Activated CD4-positive, alpha-beta memory T cell treated with anti-CD3 and anti-CD28 coated beads for 36 hours (primary cell): ENCODE measurements at regions of chr6 and their contacts with region 1.

Region 1: DNA sequence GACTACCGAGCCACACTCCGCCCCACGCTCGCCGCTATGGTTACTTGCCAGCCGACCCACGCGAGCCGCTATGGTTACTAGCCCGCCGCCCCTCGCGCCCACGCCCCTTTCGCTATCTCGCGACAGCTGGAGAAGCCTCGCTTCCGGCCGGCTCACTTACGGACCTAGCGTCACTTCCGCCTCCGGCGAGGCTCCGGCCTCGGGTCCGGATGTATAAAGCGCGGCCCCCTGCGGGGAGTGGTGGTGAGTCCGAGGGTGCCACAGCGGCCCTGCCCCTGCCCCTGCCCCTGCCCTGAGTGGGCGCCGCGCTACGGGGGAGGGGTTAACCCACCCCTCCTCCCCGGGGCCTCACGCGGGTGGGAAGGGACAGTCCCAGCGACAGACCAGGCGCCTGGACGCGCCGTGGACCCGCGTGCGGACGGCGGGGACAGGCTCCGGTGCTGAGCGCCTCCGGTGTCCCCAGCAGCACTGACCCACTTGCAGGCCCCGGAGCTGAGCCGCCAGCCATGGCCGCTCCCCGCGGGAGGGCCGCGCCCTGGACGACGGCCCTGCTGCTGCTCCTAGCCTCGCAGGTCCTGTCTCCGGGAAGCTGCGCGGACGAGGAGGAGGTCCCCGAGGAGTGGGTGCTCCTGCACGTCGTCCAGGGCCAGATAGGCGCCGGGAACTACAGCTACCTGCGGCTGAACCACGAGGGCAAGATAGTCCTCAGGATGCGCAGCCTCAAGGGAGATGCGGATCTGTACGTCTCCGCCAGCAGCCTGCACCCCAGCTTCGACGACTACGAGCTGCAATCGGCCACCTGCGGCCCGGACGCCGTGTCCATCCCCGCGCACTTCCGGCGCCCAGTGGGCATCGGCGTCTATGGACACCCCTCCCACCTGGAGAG is at the starts of genes C6orf120 and WDR27:
- DNase-seq: peak; percentile 99
- H3K4me3 Mint-ChIP-seq: peak within 1 kb of the TSS; percentile 89
- H3K27ac Mint-ChIP-seq: peak within 1 kb of the TSS; percentile 88
- H3K4me1 Mint-ChIP-seq: peaks cover 43% of the 10 kb centered on the region
- H3K27me3 Mint-ChIP-seq: no peaks in the 10 kb centered on the region
- total RNA-seq, gene C6orf120: 15.1 to 15.4 TPM
- total RNA-seq, gene WDR27: 39.7 to 41.6 TPM

Region 2: GRCh38 chr6:169479783-169480495 is 222.3 kb before region 1 on chr6:
- CTCF ChIA-PET with region 1: no interaction called
- POLR2A ChIA-PET with region 1: no interaction called
- intact Hi-C with region 1: no loop called
- DNase-seq: no peak
- H3K4me3 Mint-ChIP-seq: no peak overlapping the region
- H3K27ac Mint-ChIP-seq: no peak overlapping the region
- H3K4me1 Mint-ChIP-seq: no peaks in the 10 kb centered on the region
- H3K27me3 Mint-ChIP-seq: no peaks in the 10 kb centered on the region

Region 3: GRCh38 chr6:169654598-169655391 is 47.4 kb before region 1 on chr6:
- CTCF ChIA-PET with region 1: no interaction called
- POLR2A ChIA-PET with region 1: no interaction called
- intact Hi-C with region 1: loop called (anchors 1 kb)
- DNase-seq: peak; percentile 77
- H3K4me3 Mint-ChIP-seq: peak overlapping the region; percentile 77
- H3K27ac Mint-ChIP-seq: no peak overlapping the region
- H3K4me1 Mint-ChIP-seq: peaks cover 3% of the 10 kb centered on the region
- H3K27me3 Mint-ChIP-seq: no peaks in the 10 kb centered on the region

Region 4: DNA sequence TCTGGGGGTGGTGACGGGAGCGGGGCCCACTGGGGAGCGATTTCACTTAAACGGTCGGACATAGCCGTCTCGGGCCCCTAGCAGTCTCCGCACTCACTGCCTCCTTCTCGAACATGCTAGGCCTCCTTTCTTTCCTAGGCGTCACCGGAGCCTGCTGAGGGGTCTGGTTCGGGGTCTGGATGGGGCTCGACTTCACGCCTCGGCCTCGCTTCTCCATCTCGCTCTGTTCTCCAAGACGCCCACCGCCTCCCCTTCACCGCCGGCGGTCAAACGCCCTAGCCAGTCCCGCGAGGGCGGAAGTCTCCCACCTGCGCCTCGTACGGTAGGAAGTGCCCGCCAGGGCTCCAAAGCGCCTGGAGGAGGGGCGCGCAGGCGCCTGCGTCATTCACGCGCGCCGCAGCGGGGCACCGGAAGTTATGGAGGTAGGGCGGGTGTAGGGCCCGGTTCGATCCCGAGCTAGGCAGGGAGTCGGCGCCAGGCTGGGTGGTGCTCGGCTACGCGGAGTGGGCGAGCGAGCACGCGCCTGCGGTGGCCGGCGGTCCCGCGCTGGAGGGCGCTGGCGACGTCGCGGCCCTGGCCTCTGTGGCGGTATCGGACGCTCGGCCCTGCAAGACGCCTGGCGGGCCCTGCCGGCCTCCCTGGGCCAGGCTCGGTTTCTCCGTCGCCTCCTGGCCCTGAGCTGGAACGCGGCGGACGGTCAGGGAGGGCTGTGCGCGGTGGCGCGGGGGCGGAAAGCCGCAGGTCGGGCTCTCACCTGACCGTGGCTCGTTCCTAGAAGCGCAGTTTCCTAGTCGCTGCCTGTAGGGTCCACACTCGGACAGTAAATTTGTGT is 49.3 kb after region 1 on chr6 and contains the starts of genes DYNLT2 and ERMARD:
- CTCF ChIA-PET with region 1: no interaction called
- POLR2A ChIA-PET with region 1: interaction called, 34 read pairs
- intact Hi-C with region 1: loop called (anchors 1 kb)
- DNase-seq: peak; percentile 96
- H3K4me3 Mint-ChIP-seq: peak within 1 kb of the TSS; percentile 95
- H3K27ac Mint-ChIP-seq: peak within 1 kb of the TSS; percentile 98
- H3K4me1 Mint-ChIP-seq: peaks cover 29% of the 10 kb centered on the region
- H3K27me3 Mint-ChIP-seq: no peaks in the 10 kb centered on the region
- total RNA-seq, gene DYNLT2: 2.0 to 2.1 TPM
- total RNA-seq, gene ERMARD: 23.9 to 24.6 TPM

Region 5: GRCh38 chr6:170087941-170088581 is 385.9 kb after region 1 on chr6:
- CTCF ChIA-PET with region 1: no interaction called
- POLR2A ChIA-PET with region 1: no interaction called
- intact Hi-C with region 1: loop called (anchors 2 kb)
- DNase-seq: peak; percentile 75
- H3K4me3 Mint-ChIP-seq: peak overlapping the region; percentile 68
- H3K27ac Mint-ChIP-seq: peak overlapping the region; percentile 85
- H3K4me1 Mint-ChIP-seq: peaks cover 31% of the 10 kb centered on the region
- H3K27me3 Mint-ChIP-seq: no peaks in the 10 kb centered on the region

Region 6: DNA sequence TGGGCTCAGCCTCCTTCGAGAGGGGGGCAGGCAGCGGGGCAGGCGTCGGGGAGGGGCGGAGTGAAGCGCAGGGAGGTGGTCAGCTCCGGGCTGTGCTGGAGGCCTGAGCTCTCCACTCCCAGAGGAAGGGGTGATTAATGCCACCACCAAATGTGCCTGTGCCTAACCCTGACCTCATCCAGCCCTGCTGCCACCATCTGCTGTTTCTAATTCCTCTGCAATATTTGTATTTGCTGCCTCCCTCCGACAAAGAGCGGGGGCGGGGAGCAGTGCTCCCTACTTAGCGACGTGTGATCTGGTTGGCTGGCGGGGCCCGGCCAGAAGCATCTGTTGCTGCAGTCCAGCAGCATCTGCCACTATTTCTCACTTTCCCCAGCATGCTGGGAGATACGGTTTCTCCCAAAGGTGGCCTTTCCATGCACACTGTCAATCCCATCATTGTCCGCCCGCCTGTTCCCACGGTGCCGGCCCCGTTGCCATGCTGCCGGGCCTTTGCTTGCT is 541.6 kb after region 1 on chr6:
- CTCF ChIA-PET with region 1: no interaction called
- POLR2A ChIA-PET with region 1: no interaction called
- intact Hi-C with region 1: no loop called
- DNase-seq: no peak
- H3K4me3 Mint-ChIP-seq: no peak overlapping the region
- H3K27ac Mint-ChIP-seq: no peak overlapping the region
- H3K4me1 Mint-ChIP-seq: no peaks in the 10 kb centered on the region
- H3K27me3 Mint-ChIP-seq: peaks cover 2% of the 10 kb centered on the region